ENCODE measurements at regions of chr7 and their contacts with region 1.

Region 1: GRCh38 chr7:140924019-140924820 is 509 bp downstream of the BRAF start:
- DNase-seq: peak; percentile 77
- H3K4me3 Mint-ChIP-seq: no peak overlapping the region
- H3K27ac Mint-ChIP-seq: no peak overlapping the region
- H3K4me1 Mint-ChIP-seq: peaks cover 10% of the 10 kb centered on the region
- H3K27me3 Mint-ChIP-seq: no peaks in the 10 kb centered on the region

Region 2: GRCh38 chr7:140403878-140404564 is 520.2 kb before region 1 on chr7 and contains the start of gene RAB19:
- CTCF ChIA-PET with region 1: no interaction called
- intact Hi-C with region 1: loop called (anchors 5 kb)
- DNase-seq: peak; percentile 67
- H3K4me3 Mint-ChIP-seq: peak within 1 kb of the TSS; percentile 82
- H3K27ac Mint-ChIP-seq: peak within 1 kb of the TSS; percentile 86
- H3K4me1 Mint-ChIP-seq: peaks cover 27% of the 10 kb centered on the region
- H3K27me3 Mint-ChIP-seq: no peaks in the 10 kb centered on the region
- total RNA-seq, gene RAB19: 4.6 to 5.2 TPM

Region 3: GRCh38 chr7:140696680-140697446 is 227.4 kb before region 1 on chr7 and contains the start of gene NDUFB2:
- CTCF ChIA-PET with region 1: no interaction called
- intact Hi-C with region 1: loop called (anchors 1 kb)
- DNase-seq: peak; percentile 75
- H3K4me3 Mint-ChIP-seq: peak within 1 kb of the TSS; percentile 98
- H3K27ac Mint-ChIP-seq: peak within 1 kb of the TSS; percentile 99
- H3K4me1 Mint-ChIP-seq: peaks cover 34% of the 10 kb centered on the region
- H3K27me3 Mint-ChIP-seq: no peaks in the 10 kb centered on the region
- total RNA-seq, gene NDUFB2: 167 to 179 TPM

Region 4: GRCh38 chr7:140876519-140877248 is 47.5 kb before region 1 on chr7:
- CTCF ChIA-PET with region 1: no interaction called
- intact Hi-C with region 1: loop called (anchors 2 kb)
- DNase-seq: no peak
- H3K4me3 Mint-ChIP-seq: no peak overlapping the region
- H3K27ac Mint-ChIP-seq: no peak overlapping the region
- H3K4me1 Mint-ChIP-seq: peaks cover 56% of the 10 kb centered on the region
- H3K27me3 Mint-ChIP-seq: no peaks in the 10 kb centered on the region

Region 5: DNA sequence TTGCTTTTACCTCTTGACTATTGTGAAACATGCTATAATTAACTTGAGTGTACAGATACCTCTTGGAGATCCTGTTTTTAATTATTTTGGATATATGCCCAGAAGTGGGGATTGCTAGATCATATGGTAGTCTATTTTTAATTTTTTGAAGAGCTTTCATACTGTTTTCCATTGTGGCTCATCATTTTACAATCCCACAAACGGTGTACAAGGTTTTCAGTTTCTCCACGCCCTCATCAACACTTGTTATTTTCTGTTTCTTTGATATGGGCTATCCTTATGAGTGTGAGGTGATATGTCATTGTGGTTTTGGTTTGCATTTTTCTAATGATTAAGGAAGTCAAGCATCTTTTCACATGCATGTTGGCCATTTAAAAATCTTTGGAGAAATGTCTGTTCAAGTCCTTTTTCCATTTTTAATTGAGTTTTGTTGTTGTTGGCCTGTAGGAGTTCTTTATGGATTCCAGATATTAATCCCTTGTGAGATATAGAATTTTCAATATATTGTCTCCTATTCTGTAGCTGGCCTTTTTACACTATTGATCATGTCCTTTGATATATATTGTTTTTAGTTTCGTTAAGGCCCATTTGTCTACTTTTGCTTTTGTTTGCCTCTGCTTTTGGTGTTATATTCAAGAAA is 634.4 kb after region 1 on chr7:
- CTCF ChIA-PET with region 1: no interaction called
- intact Hi-C with region 1: loop called (anchors 2 kb)
- DNase-seq: peak; percentile 29
- H3K4me3 Mint-ChIP-seq: no peak overlapping the region
- H3K27ac Mint-ChIP-seq: peak overlapping the region; percentile 26
- H3K4me1 Mint-ChIP-seq: peaks cover 65% of the 10 kb centered on the region
- H3K27me3 Mint-ChIP-seq: no peaks in the 10 kb centered on the region

Measured in activated naive CD4-positive, alpha-beta T cell treated with anti-CD3 and anti-CD28 coated beads for 36 hours (primary cell).